ENCODE measurements at regions of chr13 and their contacts with region 1.

Region 1: DNA sequence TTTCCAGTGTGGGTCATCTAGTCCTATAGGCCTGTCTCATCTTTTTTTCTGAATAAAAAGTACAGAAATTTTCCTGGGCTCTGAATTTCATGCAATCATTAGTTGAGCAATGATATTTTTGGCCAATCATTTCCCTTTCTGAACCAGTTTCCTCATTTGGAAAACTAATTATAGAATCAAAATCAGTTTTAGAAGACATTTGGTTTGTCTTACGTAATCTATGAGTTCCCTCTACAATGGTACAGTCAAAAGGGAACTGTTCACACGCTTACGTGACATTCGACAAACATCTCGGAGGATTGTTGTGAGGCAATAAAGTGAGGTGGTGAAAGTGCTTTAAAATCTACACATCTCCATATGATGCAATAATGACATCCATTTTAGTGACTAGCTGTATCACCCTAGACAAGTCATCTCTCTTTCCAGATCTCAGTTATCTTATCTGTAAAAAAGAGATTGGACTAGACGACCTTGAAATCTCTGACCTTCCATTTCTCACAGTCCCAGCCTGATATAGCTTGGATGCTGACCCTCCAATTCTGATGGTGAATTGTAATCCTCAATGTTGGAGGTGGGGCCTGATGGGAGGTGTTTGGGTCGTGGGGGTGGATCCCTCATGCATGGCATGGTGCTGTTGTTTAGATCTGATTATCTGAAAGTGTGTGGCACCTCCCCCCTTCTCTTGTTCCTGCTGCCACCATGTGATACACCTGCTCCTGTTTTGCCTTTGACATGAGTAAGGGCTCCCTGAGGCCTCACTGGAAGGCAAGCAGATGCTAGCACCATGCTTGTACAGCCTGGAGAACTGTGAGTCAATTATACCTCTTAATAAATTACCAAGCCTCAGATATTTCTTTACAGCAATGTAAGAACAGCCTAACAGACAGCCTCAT is 26.7 kb downstream of the FLT1 start:
- DNase-seq: no peak
- ATAC-seq: peak in 1 of 2 donors; percentile 10
- H3K4me3 ChIP-seq: no peak overlapping the region
- H3K27ac ChIP-seq: no peak overlapping the region
- H3K4me1 ChIP-seq: peaks cover 2% of the 10 kb centered on the region
- H3K27me3 ChIP-seq: no peaks in the 10 kb centered on the region

Region 2: GRCh38 chr13:28355822-28356371 is 112.4 kb before region 1 on chr13:
- intact Hi-C with region 1: loop called in 1 of 4 experiments (anchors 10 kb)
- DNase-seq: no peak
- ATAC-seq: peak; percentile 35 to 74
- H3K4me3 ChIP-seq: no peak overlapping the region
- H3K27ac ChIP-seq: no peak overlapping the region
- H3K4me1 ChIP-seq: peaks cover 9% of the 10 kb centered on the region
- H3K27me3 ChIP-seq: no peaks in the 10 kb centered on the region

Region 3: DNA sequence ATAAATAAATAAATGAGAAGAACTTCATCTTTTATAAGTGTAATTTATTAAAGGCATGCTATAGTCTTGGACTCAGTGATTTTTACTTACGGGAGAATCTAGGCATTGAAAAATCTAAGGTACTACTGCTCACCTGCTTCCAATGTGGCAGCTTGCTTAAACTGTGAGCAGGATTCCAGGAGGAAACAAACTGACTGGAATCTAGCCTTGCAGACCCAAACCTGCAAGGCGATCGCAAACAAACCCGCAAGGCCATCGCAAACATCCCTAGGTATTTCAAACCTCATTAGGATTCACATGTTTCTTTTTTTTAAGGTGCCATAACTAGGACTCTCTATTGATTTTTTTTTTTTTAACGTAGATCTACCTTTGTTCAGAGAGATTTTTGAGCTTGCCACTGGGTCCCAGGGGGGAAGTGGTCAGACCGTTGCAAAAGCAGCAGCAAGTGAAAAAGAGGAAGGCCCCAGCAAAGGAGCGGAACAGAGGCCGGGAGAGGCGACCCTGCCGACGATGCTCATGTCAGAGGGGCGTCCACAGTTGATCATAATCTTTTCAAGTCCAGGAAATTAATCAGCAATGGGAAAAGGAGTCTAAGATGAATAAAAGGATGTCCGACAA is 59.3 kb after region 1 on chr13:
- intact Hi-C with region 1: no loop called
- DNase-seq: peak; percentile 23 to 59 (median 46)
- ATAC-seq: no peak
- H3K4me3 ChIP-seq: no peak overlapping the region
- H3K27ac ChIP-seq: no peak overlapping the region
- H3K4me1 ChIP-seq: peaks cover 2% of the 10 kb centered on the region
- H3K27me3 ChIP-seq: no peaks in the 10 kb centered on the region

Region 4: GRCh38 chr13:29902101-29902952 is 1434.1 kb after region 1 on chr13:
- intact Hi-C with region 1: no loop called
- DNase-seq: peak in 1 of 3 donors; percentile 41
- ATAC-seq: no peak
- H3K4me3 ChIP-seq: no peak overlapping the region
- H3K27ac ChIP-seq: no peak overlapping the region
- H3K4me1 ChIP-seq: no peaks in the 10 kb centered on the region
- H3K27me3 ChIP-seq: no peaks in the 10 kb centered on the region

Measured in right cardiac atrium (tissue), 5 donors.